ENCODE measurements at regions of chr2 and their contacts with region 1.

Region 1: GRCh38 chr2:216424274-216424673 is 12.0 kb downstream of the SMARCAL1 start:
- DNase-seq: no peak
- ATAC-seq: peak; percentile 27 to 75 (median 46)
- H3K4me3 ChIP-seq: no peak overlapping the region
- H3K27ac ChIP-seq: peak overlapping the region; percentile 75
- H3K4me1 ChIP-seq: peaks cover 36% of the 10 kb centered on the region
- H3K27me3 ChIP-seq: no peaks in the 10 kb centered on the region
- CTCF ChIP-seq: no peak

Region 2: GRCh38 chr2:216114714-216115557 is 309.3 kb before region 1 on chr2:
- intact Hi-C with region 1: loop called in 1 of 2 experiments (anchors 5 kb)
- DNase-seq: peak; percentile 96 to 98
- ATAC-seq: peak; percentile 96 to 98 (median 97)
- H3K4me3 ChIP-seq: peak overlapping the region; percentile 74
- H3K27ac ChIP-seq: peak overlapping the region; percentile 85
- H3K4me1 ChIP-seq: peaks cover 28% of the 10 kb centered on the region
- H3K27me3 ChIP-seq: no peaks in the 10 kb centered on the region
- CTCF ChIP-seq: peak; percentile 89